H1 (cell line): ENCODE measurements at regions of chr13 and their contacts with region 1.

Region 1: DNA sequence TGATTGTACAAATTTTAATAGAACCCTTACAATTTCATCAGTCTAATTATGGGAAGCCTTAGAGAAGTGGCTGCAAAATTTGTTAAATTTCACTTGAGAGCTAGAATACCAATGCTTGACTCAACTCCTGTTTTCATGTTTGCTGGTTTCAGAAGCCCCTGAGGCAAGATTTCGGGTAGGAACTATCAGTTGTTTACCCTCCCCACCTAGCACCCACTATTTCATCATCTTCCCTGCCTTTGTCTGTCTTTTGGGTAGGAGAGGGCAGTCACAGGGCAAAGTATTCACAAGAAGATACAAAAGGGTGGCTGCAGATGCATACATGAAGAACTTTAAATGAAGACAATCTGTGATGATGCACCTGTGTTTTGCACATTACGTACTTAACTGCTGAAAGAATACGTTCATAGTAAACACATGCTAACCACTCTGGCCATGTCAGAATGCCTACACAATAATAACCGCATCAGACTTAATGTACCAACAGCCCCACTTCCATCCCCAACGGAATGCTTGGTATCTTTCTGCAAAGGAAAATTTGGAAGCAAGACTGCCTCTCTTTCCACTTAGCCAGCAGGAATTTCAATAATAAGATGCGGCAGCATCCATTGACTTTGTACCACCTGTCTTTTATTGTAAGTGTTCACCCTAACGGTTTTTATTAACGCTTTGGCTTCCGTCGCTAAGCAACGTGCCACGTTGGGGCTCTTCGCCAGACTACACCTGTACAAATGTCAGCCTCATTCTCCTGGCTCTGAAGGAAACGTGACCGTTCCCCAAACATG is 30.4 kb downstream of the TPT1 start:
- DNase-seq: no peak
- H3K4me3 ChIP-seq: peak overlapping the region; percentile 9 to 65 (median 44); a peak in 7 of 8 replicates
- H3K27ac ChIP-seq: no peak overlapping the region
- H3K4me1 ChIP-seq: peaks cover 0 to 17% (median 12%) of the 10 kb centered on the region in 4 experiments
- H3K27me3 ChIP-seq: no peaks in the 10 kb centered on the region
- CTCF ChIP-seq: no peak
- EP300 ChIP-seq: no peak
- POLR2A ChIP-seq: no peak
- RAD21 ChIP-seq: no peak

Region 2: GRCh38 chr13:45297456-45298205 is 12.9 kb before region 1 on chr13:
- CTCF ChIA-PET with region 1: interaction called, 28 read pairs
- POLR2A ChIA-PET with region 1: interaction called, 9 read pairs
- DNase-seq: no peak
- H3K4me3 ChIP-seq: no peak overlapping the region
- H3K27ac ChIP-seq: no peak overlapping the region
- H3K4me1 ChIP-seq: peaks cover 0 to 2% (median under 1%) of the 10 kb centered on the region in 4 experiments; a peak in 4 of 7 replicates
- H3K27me3 ChIP-seq: no peaks in the 10 kb centered on the region
- CTCF ChIP-seq: no peak
- EP300 ChIP-seq: no peak
- POLR2A ChIP-seq: no peak
- RAD21 ChIP-seq: no peak